BJ (cell line): ENCODE measurements at regions of chr1 and their contacts with region 1.

Region 1: DNA sequence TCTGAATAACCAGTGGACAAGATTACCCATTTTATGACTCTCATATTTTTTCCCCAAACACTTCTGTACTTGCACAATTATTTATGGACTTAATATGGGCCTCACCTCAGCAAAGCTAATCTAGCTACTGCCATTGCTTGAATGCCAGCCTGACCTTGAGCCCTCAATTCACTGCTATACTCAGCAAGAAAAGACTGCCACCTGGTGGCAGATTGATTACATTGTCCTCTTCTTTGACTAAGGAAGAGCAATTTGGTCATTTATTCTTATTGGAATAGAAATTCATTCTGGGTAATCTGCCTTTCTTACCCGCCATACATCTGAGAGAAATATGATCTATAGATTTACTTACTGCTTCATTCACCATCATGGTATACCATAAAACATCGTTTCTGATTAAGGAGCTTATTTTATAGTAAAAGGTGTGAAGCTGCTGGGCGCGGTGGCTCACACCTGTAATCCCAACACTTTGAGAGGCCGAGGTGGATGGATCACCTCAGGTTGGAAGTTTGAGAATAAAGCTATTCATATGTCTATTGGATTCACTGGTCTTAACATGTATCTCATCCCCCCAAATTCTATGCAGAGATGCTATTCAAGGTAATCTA is 32.9 kb upstream of the DIPK1A start:
- DNase-seq: no peak
- H3K4me3 ChIP-seq: no peak overlapping the region
- H3K27me3 ChIP-seq: peaks cover 5% of the 10 kb centered on the region
- CTCF ChIP-seq: peak; percentile 66

Region 2: GRCh38 chr1:92511541-92511940 is 482.7 kb before region 1 on chr1:
- CTCF ChIA-PET with region 1: no interaction called
- POLR2A ChIA-PET with region 1: no interaction called
- DNase-seq: no peak
- H3K4me3 ChIP-seq: no peak overlapping the region
- H3K27me3 ChIP-seq: no peaks in the 10 kb centered on the region
- CTCF ChIP-seq: no peak

Region 3: GRCh38 chr1:92728697-92729096 is 265.5 kb before region 1 on chr1:
- CTCF ChIA-PET with region 1: no interaction called
- POLR2A ChIA-PET with region 1: no interaction called
- DNase-seq: no peak
- H3K4me3 ChIP-seq: no peak overlapping the region
- H3K27me3 ChIP-seq: no peaks in the 10 kb centered on the region
- CTCF ChIP-seq: no peak

Region 4: GRCh38 chr1:92858564-92859399 is 135.4 kb before region 1 on chr1:
- CTCF ChIA-PET with region 1: interaction called, 133 read pairs
- POLR2A ChIA-PET with region 1: no interaction called
- DNase-seq: peak; percentile 36
- H3K4me3 ChIP-seq: no peak overlapping the region
- H3K27me3 ChIP-seq: no peaks in the 10 kb centered on the region
- CTCF ChIP-seq: peak; percentile 82

Region 5: DNA sequence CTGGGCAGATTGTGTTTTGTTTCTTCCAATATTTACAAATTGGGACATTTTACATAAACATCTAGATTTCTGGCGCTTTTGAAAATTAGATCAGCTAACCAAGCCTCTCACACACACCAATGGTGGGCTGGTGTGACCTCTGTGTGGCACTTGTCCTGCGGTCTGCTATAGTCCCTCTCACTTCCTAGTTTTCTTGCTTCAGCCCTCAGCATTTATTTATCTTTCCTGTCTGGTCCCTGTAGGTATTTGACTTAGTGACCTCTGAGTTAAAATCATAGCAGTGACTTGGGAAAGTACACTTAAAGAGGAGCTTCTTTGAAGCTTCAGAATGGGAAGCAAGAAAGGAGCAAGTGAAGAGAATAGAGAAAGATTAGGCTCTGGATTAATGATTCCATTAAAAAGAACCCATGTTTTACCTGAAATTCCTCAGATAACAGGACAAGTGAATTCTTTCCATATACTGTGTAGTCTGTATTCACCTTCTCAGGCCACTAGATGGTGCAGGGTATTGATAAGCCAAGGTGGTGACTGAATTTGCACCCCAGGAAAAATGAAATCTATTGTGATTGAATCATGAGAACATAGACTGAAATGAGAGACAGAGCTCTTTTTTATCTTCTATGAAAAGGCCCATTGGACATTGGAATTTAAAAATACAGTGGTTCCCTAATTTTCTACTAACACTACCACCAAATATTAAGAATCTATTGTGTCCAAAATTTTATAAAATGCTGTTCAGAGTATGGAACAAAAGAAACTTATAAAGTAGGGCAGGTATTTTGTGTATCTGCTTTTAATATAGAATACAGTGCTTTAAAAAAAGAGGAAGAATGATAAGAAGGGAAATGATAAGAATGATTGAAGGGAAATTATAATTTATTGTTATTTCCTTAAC is 25.8 kb before region 1 on chr1:
- CTCF ChIA-PET with region 1: interaction called, 72 read pairs
- POLR2A ChIA-PET with region 1: no interaction called
- DNase-seq: no peak
- H3K4me3 ChIP-seq: no peak overlapping the region
- H3K27me3 ChIP-seq: peaks cover 5% of the 10 kb centered on the region
- CTCF ChIP-seq: peak; percentile 67

Region 6: DNA sequence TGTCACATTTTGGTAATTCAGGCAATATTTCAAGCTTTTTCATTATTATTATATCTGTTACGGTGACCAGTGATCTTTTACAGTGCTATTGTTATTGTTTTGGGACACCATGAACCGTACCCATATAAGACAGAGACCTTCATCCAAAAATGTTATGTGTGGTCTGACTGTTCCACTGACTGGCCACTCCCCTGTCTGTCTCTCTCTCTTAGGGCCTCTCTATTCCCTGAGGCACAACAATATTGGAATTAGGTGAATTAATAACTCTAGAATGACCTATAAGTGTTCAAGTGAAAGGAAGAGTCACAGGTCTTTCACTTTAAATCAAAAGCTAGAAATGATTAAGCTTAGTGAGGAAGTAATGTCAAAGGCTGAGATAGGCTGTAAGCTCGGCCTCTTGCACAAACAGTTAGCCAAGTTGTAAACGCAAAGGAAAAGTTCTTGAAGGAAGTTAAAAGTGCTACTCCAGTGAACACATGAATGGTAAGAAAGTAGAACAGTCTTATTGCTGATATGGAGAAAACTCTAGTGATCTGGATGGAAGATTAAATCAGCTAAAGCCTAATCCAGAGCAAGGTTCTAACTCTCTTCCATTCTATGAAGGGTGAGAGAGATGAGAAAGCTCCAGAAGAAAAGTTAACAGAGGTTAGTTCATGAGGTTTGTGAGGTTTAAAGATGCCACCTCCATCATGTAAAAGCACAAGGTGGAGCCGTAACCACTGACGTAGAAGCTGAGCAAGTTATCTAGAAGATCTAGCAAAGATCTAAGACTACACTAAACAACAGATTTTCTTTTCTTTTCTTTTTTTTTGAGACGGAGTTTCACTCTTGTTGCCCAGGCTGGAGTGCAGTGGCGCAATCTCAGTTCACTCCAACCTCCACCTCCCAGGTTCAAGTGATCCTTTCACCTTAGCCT is 13.2 kb before region 1 on chr1:
- CTCF ChIA-PET with region 1: interaction called, 15 read pairs
- POLR2A ChIA-PET with region 1: no interaction called
- DNase-seq: no peak
- H3K4me3 ChIP-seq: no peak overlapping the region
- H3K27me3 ChIP-seq: no peaks in the 10 kb centered on the region; the same call in 1 of the 2 replicates
- CTCF ChIP-seq: no peak

Region 7: GRCh38 chr1:93061895-93062792 is 67.9 kb after region 1 on chr1:
- CTCF ChIA-PET with region 1: interaction called, 14 read pairs
- POLR2A ChIA-PET with region 1: no interaction called
- DNase-seq: no peak
- H3K4me3 ChIP-seq: no peak overlapping the region
- H3K27me3 ChIP-seq: peaks cover 6% of the 10 kb centered on the region
- CTCF ChIP-seq: peak; percentile 35; the same call in 1 of the 2 replicates